CD8-positive, alpha-beta T cell (primary cell): ENCODE measurements at regions of chr10 and their contacts with region 1.

Region 1: DNA sequence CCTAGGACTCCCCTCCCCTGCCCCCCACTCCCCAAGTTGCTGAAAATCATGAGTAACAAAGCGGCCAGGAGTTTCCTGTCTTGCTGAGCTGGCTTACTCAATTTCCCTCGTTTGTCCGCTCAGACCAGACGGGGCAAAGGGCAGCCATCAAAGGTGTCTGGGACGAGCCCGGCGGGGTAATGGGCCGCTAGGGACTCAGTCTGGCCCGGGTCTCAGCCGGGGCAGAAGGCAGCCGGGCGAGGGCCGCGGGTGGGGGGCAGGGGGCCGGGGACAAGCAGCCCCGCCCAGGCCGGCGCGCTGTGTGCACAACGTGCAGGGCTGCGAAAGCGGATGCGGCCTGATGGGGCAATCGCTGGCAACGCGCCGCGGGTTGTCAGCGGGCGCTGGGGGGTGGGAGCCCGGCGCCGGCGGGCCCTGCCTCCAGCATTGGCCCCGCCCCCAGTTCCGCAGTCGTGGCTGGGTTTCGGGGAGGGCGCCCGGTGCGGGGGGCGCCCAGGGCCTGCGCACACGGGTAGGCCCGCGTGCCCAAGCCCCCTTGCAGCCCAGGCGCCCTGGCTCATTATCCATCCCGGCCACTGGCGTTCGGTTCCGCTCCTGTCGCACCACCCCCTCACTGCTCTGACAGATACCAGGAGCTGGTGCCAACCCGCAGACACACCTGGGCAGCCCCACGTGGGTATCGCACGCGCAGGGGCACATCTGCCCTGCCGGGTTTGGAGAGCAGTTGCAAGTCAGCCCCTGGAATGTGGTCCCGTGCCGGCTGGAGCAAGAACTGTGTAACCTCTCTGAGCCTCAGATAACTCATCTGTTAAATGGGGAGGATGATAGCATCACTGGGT is 35.1 kb downstream of the DNAJB12 start:
- DNase-seq: peak; percentile 75 to 95 (median 88)
- ATAC-seq: peak; percentile 67
- H3K4me3 ChIP-seq: peak overlapping the region; percentile 49 to 59
- H3K4me3 Mint-ChIP-seq: peak overlapping the region; percentile 74
- H3K27ac ChIP-seq: peak overlapping the region; percentile 87 to 88
- H3K27ac Mint-ChIP-seq: peak overlapping the region; percentile 98
- H3K4me1 ChIP-seq: peaks cover 92% of the 10 kb centered on the region
- H3K4me1 Mint-ChIP-seq: peaks cover 85% of the 10 kb centered on the region
- H3K27me3 ChIP-seq: no peaks in the 10 kb centered on the region
- H3K27me3 Mint-ChIP-seq: no peaks in the 10 kb centered on the region
- CTCF ChIP-seq: no peak

Region 2: DNA sequence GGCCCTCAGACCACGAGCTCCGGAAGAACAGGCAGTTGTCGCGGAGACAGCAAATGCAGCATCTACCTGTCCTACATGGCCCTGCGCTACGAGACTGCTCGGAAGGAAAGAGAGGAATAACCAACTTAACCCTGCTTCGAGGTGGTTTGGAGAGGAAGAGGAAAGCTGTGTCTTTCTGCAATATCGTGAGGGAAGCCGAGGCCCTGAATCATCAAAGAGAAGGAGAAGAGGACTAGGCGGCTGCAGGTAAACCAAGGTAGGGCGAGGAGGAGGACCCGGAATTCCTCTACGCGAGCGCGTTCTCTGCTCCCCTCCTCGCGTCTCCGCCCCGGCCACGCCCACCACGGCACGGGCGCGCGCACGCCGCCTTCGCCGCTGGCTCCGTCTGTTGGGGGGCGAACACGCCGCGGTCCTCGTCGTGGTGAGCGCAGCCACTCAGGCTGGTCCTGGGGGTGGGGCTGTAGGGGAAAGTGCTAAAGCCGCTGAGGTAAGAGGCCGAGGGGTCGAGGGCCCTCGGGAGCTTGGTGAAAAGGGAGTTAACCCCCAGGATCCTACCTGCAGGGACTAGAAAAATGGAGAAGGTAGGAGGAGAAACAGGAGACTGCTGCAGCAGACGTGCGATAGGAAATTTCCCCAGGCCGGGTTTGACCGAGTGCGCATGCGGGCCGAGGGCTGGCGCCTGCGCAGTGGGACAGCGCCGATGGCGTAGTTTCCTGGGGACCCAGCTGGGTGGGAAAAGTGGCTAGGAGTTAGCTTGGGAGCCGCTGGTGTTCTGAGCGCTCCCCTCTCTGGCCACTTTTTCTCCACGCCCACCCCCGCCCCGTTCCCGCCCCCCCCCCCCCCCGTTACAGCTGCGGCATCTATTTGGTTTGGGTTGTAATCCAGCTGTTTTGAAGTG is 103.7 kb before region 1 on chr10 and contains the starts of genes ANAPC16 and ASCC1:
- CTCF ChIA-PET with region 1: interaction called, 3 read pairs
- POLR2A ChIA-PET with region 1: interaction called, 4 read pairs
- intact Hi-C with region 1: loop called in 1 of 2 experiments (anchors 5 kb)
- DNase-seq: peak; percentile 90 to 98 (median 95)
- ATAC-seq: peak; percentile 83
- H3K4me3 ChIP-seq: peak within 1 kb of the TSS; percentile 78 to 82
- H3K4me3 Mint-ChIP-seq: peak within 1 kb of the TSS; percentile 100
- H3K27ac ChIP-seq: peak within 1 kb of the TSS; percentile 61 to 93
- H3K27ac Mint-ChIP-seq: peak within 1 kb of the TSS; percentile 100
- H3K4me1 ChIP-seq: peaks cover 58% of the 10 kb centered on the region
- H3K4me1 Mint-ChIP-seq: peaks cover 54% of the 10 kb centered on the region
- H3K27me3 ChIP-seq: no peaks in the 10 kb centered on the region
- H3K27me3 Mint-ChIP-seq: no peaks in the 10 kb centered on the region
- CTCF ChIP-seq: no peak
- total RNA-seq, gene ANAPC16: 46.6 to 48.0 TPM
- total RNA-seq, gene ASCC1: 16.5 to 19.1 TPM

Region 3: GRCh38 chr10:72248468-72249151 is 71.0 kb before region 1 on chr10:
- CTCF ChIA-PET with region 1: interaction called, 3 read pairs
- POLR2A ChIA-PET with region 1: interaction called, 13 read pairs
- intact Hi-C with region 1: loop called in 1 of 2 experiments (anchors 2 kb)
- DNase-seq: peak; percentile 40 to 91 (median 77)
- ATAC-seq: peak; percentile 88
- H3K4me3 ChIP-seq: peak overlapping the region; percentile 25 to 28
- H3K4me3 Mint-ChIP-seq: peak overlapping the region; percentile 81
- H3K27ac ChIP-seq: peak overlapping the region; percentile 61 to 64
- H3K27ac Mint-ChIP-seq: peak overlapping the region; percentile 96
- H3K4me1 ChIP-seq: peaks cover 90% of the 10 kb centered on the region
- H3K4me1 Mint-ChIP-seq: peaks cover 82% of the 10 kb centered on the region
- H3K27me3 ChIP-seq: no peaks in the 10 kb centered on the region
- H3K27me3 Mint-ChIP-seq: no peaks in the 10 kb centered on the region
- CTCF ChIP-seq: no peak

Region 4: GRCh38 chr10:72297968-72298773 is 21.5 kb before region 1 on chr10:
- CTCF ChIA-PET with region 1: interaction called, 4 read pairs
- POLR2A ChIA-PET with region 1: interaction called, 29 read pairs
- intact Hi-C with region 1: loop called (anchors 1 kb)
- DNase-seq: peak; percentile 68 to 96 (median 83)
- ATAC-seq: peak; percentile 58
- H3K4me3 ChIP-seq: peak overlapping the region; percentile 53 to 57
- H3K4me3 Mint-ChIP-seq: peak overlapping the region; percentile 72
- H3K27ac ChIP-seq: peak overlapping the region; percentile 70 to 96
- H3K27ac Mint-ChIP-seq: peak overlapping the region; percentile 80
- H3K4me1 ChIP-seq: peaks cover 38% of the 10 kb centered on the region
- H3K4me1 Mint-ChIP-seq: peaks cover 41% of the 10 kb centered on the region
- H3K27me3 ChIP-seq: no peaks in the 10 kb centered on the region
- H3K27me3 Mint-ChIP-seq: no peaks in the 10 kb centered on the region
- CTCF ChIP-seq: no peak

Region 5: DNA sequence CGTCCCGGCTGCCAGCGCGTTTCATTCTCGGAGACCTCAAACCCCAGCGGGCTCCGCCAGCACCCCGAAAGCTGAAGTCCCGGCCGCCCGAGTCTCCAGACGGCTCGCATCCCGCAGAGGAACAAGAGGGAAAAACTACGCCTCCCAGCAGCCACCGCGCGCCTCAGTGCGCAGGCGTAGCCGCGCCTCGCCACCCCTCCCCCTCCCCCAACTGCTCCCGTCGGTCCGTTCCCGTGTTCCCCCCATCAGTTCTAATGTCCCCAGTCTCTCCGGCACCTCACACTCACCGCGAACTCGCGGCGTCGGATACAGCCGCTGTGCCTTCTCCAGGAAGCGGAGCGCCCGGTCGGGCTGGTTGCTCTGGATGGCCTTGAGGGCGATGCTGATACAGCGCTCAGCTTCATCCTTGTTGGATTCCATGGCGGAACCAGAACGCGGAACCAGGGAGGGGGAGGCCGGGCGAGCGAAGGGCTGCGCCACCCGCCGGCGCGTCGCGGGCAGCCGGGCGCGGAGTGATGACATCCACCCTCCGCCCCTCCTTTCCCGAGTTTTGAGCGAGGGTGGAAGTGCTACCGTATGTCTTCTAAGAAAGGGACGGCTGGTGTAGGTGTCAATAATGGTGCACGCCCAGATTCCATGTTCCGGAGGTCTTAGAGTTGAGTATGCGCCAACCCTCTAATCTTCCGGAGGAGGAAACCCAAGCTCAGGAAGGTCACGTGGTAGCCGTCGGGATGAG is 35.0 kb after region 1 on chr10 and contains the start of gene DNAJB12:
- CTCF ChIA-PET with region 1: no interaction called
- POLR2A ChIA-PET with region 1: no interaction called
- intact Hi-C with region 1: loop called in 1 of 2 experiments (anchors 1 kb)
- DNase-seq: peak; percentile 76 to 95 (median 88)
- ATAC-seq: peak; percentile 82
- H3K4me3 ChIP-seq: peak within 1 kb of the TSS; percentile 96 to 98
- H3K4me3 Mint-ChIP-seq: peak within 1 kb of the TSS; percentile 98
- H3K27ac ChIP-seq: peak within 1 kb of the TSS; percentile 87 to 97
- H3K27ac Mint-ChIP-seq: peak within 1 kb of the TSS; percentile 96
- H3K4me1 ChIP-seq: peaks cover 19% of the 10 kb centered on the region
- H3K4me1 Mint-ChIP-seq: peaks cover 45% of the 10 kb centered on the region
- H3K27me3 ChIP-seq: no peaks in the 10 kb centered on the region
- H3K27me3 Mint-ChIP-seq: no peaks in the 10 kb centered on the region
- CTCF ChIP-seq: no peak
- total RNA-seq, gene DNAJB12: 33.9 to 37.5 TPM

Region 6: GRCh38 chr10:72625608-72626443 is 306.2 kb after region 1 on chr10 and contains the start of gene MICU1:
- CTCF ChIA-PET with region 1: no interaction called
- POLR2A ChIA-PET with region 1: no interaction called
- intact Hi-C with region 1: loop called in 1 of 2 experiments (anchors 1 kb)
- DNase-seq: peak; percentile 84 to 97 (median 93)
- ATAC-seq: peak; percentile 99
- H3K4me3 ChIP-seq: peak within 1 kb of the TSS; percentile 91 to 99
- H3K4me3 Mint-ChIP-seq: peak within 1 kb of the TSS; percentile 98
- H3K27ac ChIP-seq: peak within 1 kb of the TSS; percentile 63 to 64
- H3K27ac Mint-ChIP-seq: peak within 1 kb of the TSS; percentile 92
- H3K4me1 ChIP-seq: peaks cover 11% of the 10 kb centered on the region
- H3K4me1 Mint-ChIP-seq: peaks cover 23% of the 10 kb centered on the region
- H3K27me3 ChIP-seq: no peaks in the 10 kb centered on the region
- H3K27me3 Mint-ChIP-seq: no peaks in the 10 kb centered on the region
- CTCF ChIP-seq: no peak
- total RNA-seq, gene MICU1: 8.2 to 11.3 TPM